MCF 10A (cell line): ENCODE measurements at regions of chr3 and their contacts with region 1.

Region 1: GRCh38 chr3:120170223-120170622 is 76.0 kb upstream of the GSK3B start:
- DNase-seq: peak; percentile 93
- H3K4me3 Mint-ChIP-seq: peak overlapping the region; percentile 13
- H3K27ac Mint-ChIP-seq: peak overlapping the region; percentile 75
- H3K4me1 Mint-ChIP-seq: peaks cover 33% of the 10 kb centered on the region
- H3K27me3 Mint-ChIP-seq: no peaks in the 10 kb centered on the region
- CTCF ChIP-seq: no peak

Region 2: GRCh38 chr3:120102674-120103073 is 67.5 kb before region 1 on chr3:
- CTCF ChIA-PET with region 1: no interaction called
- POLR2A ChIA-PET with region 1: interaction called, 16 read pairs
- intact Hi-C with region 1: no loop called
- DNase-seq: peak; percentile 88
- H3K4me3 Mint-ChIP-seq: no peak overlapping the region
- H3K27ac Mint-ChIP-seq: peak overlapping the region; percentile 82
- H3K4me1 Mint-ChIP-seq: peaks cover 23% of the 10 kb centered on the region
- H3K27me3 Mint-ChIP-seq: no peaks in the 10 kb centered on the region
- CTCF ChIP-seq: no peak

Region 3: DNA sequence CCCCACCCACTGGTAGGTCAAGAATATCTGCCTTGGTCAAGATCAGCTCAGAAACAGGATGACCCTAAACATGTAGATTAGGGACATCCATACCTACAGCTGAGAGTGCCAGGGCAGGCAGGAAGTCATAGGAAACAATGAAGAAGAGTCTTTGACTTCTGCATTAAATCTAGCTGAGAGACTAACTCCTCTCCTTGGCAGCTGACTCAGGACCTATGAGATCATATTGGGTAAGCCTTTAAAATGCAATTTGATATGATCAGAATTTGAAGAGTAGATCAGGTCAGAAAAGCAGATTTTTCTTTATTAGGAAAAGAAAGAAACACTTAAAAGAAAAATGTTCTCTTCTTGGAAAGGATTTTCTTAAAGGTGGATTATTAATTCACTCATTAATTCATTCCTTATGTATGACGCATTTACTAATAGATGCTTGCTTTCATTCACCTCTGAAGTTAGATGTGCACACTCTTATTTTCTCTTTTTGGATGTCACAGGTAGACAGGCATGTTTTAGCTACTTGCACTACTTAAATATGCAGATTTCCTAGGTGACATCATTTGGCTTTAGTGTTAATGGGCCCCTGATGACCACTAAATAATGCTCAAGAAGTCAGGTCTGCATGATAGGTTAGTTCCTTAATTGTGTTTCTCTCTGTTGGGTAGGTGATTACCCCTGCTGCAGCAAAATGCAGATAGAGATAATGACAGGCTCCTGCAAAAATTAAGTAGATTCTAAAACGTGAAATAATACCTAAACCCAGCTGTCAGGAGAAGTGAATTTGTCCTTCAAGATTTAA is 40.3 kb before region 1 on chr3:
- CTCF ChIA-PET with region 1: no interaction called
- POLR2A ChIA-PET with region 1: interaction called, 3 read pairs
- intact Hi-C with region 1: loop called (anchors 1 kb)
- DNase-seq: no peak
- H3K4me3 Mint-ChIP-seq: no peak overlapping the region
- H3K27ac Mint-ChIP-seq: no peak overlapping the region
- H3K4me1 Mint-ChIP-seq: no peaks in the 10 kb centered on the region
- H3K27me3 Mint-ChIP-seq: no peaks in the 10 kb centered on the region
- CTCF ChIP-seq: no peak

Region 4: DNA sequence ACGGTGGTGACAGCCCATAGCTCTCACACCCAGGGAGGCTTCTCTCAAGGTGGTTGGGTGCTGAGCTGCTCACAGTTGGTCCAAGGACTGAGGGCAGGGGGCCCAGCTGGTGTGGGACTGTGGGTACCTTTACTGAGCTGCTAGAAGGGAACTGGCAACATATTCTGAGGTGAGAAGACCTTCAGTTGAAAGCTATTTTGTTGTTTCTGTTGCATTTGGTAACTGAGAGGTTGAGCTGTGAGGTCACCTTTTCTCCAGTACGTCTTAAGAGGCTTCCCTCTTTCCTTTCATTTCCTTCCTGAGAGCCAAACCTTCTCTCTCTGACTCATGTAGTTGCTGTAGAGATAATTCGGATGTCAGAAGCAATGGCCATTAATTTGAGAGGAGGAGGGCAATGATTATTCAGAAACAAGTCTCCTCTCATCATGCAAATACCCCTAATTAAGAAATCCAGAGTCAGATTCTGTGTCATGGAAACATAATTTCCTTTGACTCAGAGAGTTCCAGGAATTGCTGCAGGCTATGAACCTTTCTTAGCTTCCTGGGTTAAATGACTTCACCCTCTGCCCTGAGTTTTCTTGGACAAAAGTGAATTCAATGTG is 17.0 kb before region 1 on chr3:
- CTCF ChIA-PET with region 1: no interaction called
- POLR2A ChIA-PET with region 1: interaction called, 12 read pairs
- intact Hi-C with region 1: no loop called
- DNase-seq: peak; percentile 80
- H3K4me3 Mint-ChIP-seq: no peak overlapping the region
- H3K27ac Mint-ChIP-seq: peak overlapping the region; percentile 46
- H3K4me1 Mint-ChIP-seq: peaks cover 19% of the 10 kb centered on the region
- H3K27me3 Mint-ChIP-seq: no peaks in the 10 kb centered on the region
- CTCF ChIP-seq: no peak

Region 5: DNA sequence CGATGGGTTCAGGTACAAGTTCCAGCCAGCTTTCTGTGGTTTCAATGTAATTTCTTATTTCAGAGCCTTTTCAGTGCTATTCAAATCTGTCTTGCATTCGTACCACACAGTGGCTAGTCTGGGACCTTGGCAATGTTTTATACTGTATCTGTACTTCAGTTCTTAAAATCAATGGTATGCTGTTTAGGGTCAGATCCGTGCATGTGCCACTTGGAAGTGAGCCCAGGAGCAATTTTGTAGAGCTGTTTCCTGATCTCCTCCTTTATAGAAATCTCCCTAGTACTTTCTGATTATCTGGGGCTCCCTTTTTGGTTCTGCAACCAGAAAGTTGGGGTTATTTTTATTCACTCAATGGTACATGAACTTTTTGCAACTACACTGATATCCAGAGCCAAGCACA is 366.4 kb after region 1 on chr3:
- CTCF ChIA-PET with region 1: no interaction called
- POLR2A ChIA-PET with region 1: no interaction called
- intact Hi-C with region 1: no loop called
- DNase-seq: no peak
- H3K4me3 Mint-ChIP-seq: no peak overlapping the region
- H3K27ac Mint-ChIP-seq: no peak overlapping the region
- H3K4me1 Mint-ChIP-seq: no peaks in the 10 kb centered on the region
- H3K27me3 Mint-ChIP-seq: peaks cover 20% of the 10 kb centered on the region
- CTCF ChIP-seq: no peak